OCI-LY7 (cell line): ENCODE measurements at regions of chr9 and their contacts with region 1.

Region 1: GRCh38 chr9:136225748-136226679 is 19.6 kb downstream of the QSOX2 start:
- DNase-seq: peak; percentile 90
- H3K4me3 ChIP-seq: peak overlapping the region; percentile 56
- H3K27ac ChIP-seq: peak overlapping the region; percentile 97
- H3K4me1 ChIP-seq: peaks cover 60% of the 10 kb centered on the region
- CTCF ChIP-seq: peak; percentile 93

Region 2: GRCh38 chr9:136244122-136244968 is 18.3 kb after region 1 on chr9:
- CTCF ChIA-PET with region 1: interaction called, 8 read pairs
- POLR2A ChIA-PET with region 1: interaction called, 6 read pairs
- intact Hi-C with region 1: loop called (anchors 1 kb)
- DNase-seq: peak; percentile 84
- H3K4me3 ChIP-seq: peak overlapping the region; percentile 98
- H3K27ac ChIP-seq: peak overlapping the region; percentile 86
- H3K4me1 ChIP-seq: peaks cover 59% of the 10 kb centered on the region
- CTCF ChIP-seq: no peak

Region 3: GRCh38 chr9:136267261-136268111 is 41.5 kb after region 1 on chr9:
- CTCF ChIA-PET with region 1: interaction called, 4 read pairs
- POLR2A ChIA-PET with region 1: interaction called, 3 read pairs
- intact Hi-C with region 1: loop called (anchors 2 kb)
- DNase-seq: peak; percentile 90
- H3K4me3 ChIP-seq: peak overlapping the region; percentile 58
- H3K27ac ChIP-seq: no peak overlapping the region
- H3K4me1 ChIP-seq: peaks cover 9% of the 10 kb centered on the region
- CTCF ChIP-seq: peak; percentile 60

Region 4: GRCh38 chr9:136283291-136284235 is 57.5 kb after region 1 on chr9:
- CTCF ChIA-PET with region 1: no interaction called
- POLR2A ChIA-PET with region 1: no interaction called
- intact Hi-C with region 1: loop called (anchors 2 kb)
- DNase-seq: peak; percentile 78
- H3K4me3 ChIP-seq: no peak overlapping the region
- H3K27ac ChIP-seq: no peak overlapping the region
- H3K4me1 ChIP-seq: peaks cover 20% of the 10 kb centered on the region
- CTCF ChIP-seq: peak; percentile 86